Aorta (tissue), 5 donors: ENCODE measurements at regions of chr5 and their contacts with region 1.

Region 1: DNA sequence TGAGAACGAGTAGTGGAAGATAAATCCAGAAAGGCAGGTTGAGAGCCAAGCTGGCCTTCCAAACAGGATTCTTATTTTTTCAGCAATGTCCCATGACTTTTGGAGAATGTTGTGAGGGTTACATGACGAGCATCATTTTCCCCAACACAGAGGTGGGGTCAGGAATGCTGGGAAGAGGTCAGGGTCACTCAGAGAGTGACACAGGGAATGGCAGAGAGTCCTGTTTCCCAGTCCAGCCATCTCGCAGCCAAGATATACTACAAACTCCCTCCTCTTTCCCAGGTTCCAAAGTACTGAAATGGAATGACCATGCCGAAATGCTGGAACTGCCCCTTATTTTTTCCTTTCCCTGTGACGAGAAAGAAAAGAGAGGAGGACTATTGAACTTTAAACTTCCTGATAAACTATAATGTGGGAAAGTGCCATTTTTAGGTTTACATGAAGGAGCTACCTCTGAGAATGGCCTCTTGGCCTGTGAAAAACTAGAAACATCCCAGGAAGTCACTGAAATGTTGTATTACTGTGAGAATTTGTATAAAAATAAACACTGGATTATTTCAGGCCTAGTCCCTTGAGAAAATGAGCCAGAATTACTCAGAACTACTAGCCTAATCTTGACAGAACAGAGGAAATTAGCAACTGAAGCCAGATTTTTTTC is 420.4 kb downstream of the CETN3 start:
- DNase-seq: peak in 1 of 2 donors; percentile 70
- ATAC-seq: peak; percentile 88
- H3K4me3 ChIP-seq: no peak overlapping the region
- H3K27ac ChIP-seq: peak overlapping the region; percentile 89 to 98
- H3K4me1 ChIP-seq: no peaks in the 10 kb centered on the region
- H3K27me3 ChIP-seq: no peaks in the 10 kb centered on the region

Region 2: GRCh38 chr5:89893546-89893945 is 95.6 kb before region 1 on chr5:
- intact Hi-C with region 1: no loop called
- DNase-seq: no peak
- ATAC-seq: no peak
- H3K4me3 ChIP-seq: no peak overlapping the region
- H3K27ac ChIP-seq: no peak overlapping the region
- H3K4me1 ChIP-seq: no peaks in the 10 kb centered on the region
- H3K27me3 ChIP-seq: no peaks in the 10 kb centered on the region

Region 3: GRCh38 chr5:90264689-90265544 is 275.8 kb after region 1 on chr5:
- intact Hi-C with region 1: loop called in 1 of 2 experiments (anchors 10 kb)
- DNase-seq: peak; percentile 67 to 80
- ATAC-seq: peak; percentile 84
- H3K4me3 ChIP-seq: no peak overlapping the region
- H3K27ac ChIP-seq: no peak overlapping the region
- H3K4me1 ChIP-seq: peaks cover 0 to 2% of the 10 kb centered on the region in 2 donors
- H3K27me3 ChIP-seq: no peaks in the 10 kb centered on the region